Adrenal gland (tissue), 19 donors: ENCODE measurements at regions of chr6 and their contacts with region 1.

Region 1: DNA sequence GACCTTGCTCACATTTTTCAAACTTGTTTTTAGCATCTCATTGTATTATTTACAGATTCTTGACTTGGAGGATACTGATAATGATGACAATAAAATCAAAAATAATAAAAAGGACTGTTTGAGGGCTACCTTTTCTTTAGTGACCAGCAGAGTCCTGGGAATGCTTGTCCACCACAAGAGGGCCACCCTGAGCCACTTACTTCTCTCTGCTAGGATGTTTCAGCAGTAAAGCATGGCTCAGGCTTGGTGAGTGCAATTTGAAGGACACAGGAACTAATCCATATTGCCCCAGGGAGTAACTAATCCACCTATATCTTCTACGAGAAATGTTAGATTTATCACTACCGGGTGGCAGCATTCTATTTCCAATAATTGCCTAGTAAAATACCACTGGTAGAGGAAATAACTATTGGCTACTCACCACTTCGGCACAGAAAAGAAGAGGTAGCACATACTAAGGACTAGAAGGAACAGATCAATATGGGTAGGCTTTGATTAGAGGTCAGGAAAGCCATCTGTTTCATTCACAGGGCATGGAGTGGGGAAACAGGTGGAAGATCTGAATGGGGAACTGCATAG is 5.8 kb upstream of the KIAA0408 start:
- DNase-seq: peak; percentile 67 to 86 (median 82)
- H3K4me3 ChIP-seq: no peak overlapping the region
- H3K27ac ChIP-seq: peak overlapping the region in 1 of 5 donors; percentile 23
- H3K4me1 ChIP-seq: no peaks in the 10 kb centered on the region
- H3K27me3 ChIP-seq: no peaks in the 10 kb centered on the region
- CTCF ChIP-seq: peak; percentile 69 to 89 (median 79)
- POLR2A ChIP-seq: no peak

Region 2: GRCh38 chr6:127291495-127291894 is 173.5 kb before region 1 on chr6:
- intact Hi-C with region 1: no loop called
- DNase-seq: no peak
- H3K4me3 ChIP-seq: no peak overlapping the region
- H3K27ac ChIP-seq: no peak overlapping the region
- H3K4me1 ChIP-seq: peaks cover 0 to 10% of the 10 kb centered on the region in 2 donors
- H3K27me3 ChIP-seq: no peaks in the 10 kb centered on the region
- CTCF ChIP-seq: no peak
- POLR2A ChIP-seq: no peak

Region 3: GRCh38 chr6:127539272-127539671 is 74.3 kb after region 1 on chr6:
- intact Hi-C with region 1: loop called (anchors 5 kb)
- DNase-seq: no peak
- H3K4me3 ChIP-seq: no peak overlapping the region
- H3K27ac ChIP-seq: no peak overlapping the region
- H3K4me1 ChIP-seq: no peaks in the 10 kb centered on the region
- H3K27me3 ChIP-seq: no peaks in the 10 kb centered on the region
- CTCF ChIP-seq: peak; percentile 34 to 68 (median 52)
- POLR2A ChIP-seq: no peak